ENCODE measurements at regions of chr11 and their contacts with region 1.

Region 1: DNA sequence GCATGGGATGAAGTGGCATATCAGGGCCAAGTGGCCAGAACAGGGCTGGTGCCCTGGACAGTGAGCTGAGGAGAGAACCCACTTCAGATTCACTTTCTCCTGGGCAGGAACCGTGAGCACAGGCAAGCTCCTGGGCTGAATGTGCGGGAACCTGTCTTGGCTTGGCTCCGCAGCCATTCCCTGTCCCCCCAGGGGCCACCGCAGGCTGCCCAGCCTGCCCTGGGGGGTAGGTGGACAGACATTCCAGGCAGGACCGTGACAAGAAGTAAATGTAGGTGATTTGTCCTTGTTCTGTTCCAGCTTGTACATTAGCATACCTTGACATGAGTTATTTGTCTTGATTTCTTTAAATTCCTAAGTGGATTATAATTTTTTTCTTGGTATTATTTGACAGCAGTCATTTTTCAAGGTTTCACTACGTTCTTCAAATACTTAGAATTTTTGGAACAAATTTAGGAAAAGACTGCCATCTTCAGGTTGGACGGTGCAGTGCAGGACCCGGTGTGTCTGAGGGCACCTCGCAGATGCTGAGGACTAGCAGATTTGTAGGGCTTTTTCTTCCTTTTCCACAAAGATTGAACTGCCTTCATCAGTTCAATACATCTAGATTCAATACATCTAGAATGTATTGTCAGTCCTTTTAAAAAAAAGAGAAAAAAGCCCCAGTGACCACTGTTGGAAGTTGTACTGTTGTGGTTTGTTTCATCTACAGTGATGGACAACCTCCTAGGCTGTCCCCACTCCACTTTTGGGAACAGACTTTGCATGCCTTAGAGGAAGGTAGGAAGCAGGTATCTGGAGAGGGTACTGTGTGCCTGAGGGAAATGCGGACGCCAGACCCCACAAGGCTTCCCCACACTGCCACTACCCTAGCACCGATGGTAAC is 115.1 kb upstream of the RASSF10 start:
- DNase-seq: peak in 1 of 2 donors; percentile 67
- ATAC-seq: peak in 2 of 3 donors; percentile 49 to 57
- H3K4me3 ChIP-seq: no peak overlapping the region
- H3K4me3 Mint-ChIP-seq: no peak overlapping the region
- H3K27ac ChIP-seq: no peak overlapping the region
- H3K27ac Mint-ChIP-seq: no peak overlapping the region
- H3K4me1 ChIP-seq: no peaks in the 10 kb centered on the region
- H3K4me1 Mint-ChIP-seq: no peaks in the 10 kb centered on the region
- H3K27me3 ChIP-seq: no peaks in the 10 kb centered on the region
- H3K27me3 Mint-ChIP-seq: peaks cover 24 to 33% of the 10 kb centered on the region in 2 donors
- CTCF ChIP-seq: no peak

Region 2: DNA sequence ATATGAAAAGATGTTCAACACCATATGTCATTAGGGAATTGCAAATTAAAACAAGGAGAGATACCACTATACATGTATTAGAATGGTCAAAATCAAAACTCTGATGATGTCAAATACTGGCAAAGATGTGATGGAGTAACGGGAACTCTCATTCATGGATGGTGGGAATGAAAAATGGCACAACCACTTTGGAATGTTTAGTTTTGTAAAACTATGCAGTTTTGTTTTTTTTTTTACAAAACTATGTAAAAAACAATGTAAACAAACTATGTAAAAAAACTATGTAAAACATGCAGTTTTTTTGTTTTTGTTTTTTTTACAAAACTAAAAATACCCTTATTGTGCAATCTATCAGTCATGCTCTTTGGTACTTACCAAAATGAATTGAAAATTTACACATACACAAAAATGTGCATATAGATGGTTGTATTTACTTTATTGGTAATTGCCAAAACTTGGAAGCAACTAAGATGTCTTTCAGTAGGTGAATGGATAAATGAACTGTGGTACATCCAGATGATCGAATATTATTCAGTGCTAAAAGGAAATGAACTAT is 1057.3 kb before region 1 on chr11:
- intact Hi-C with region 1: no loop called
- DNase-seq: no peak
- ATAC-seq: no peak
- H3K4me3 ChIP-seq: no peak overlapping the region
- H3K4me3 Mint-ChIP-seq: no peak overlapping the region
- H3K27ac ChIP-seq: no peak overlapping the region
- H3K27ac Mint-ChIP-seq: no peak overlapping the region
- H3K4me1 ChIP-seq: peaks cover 9% of the 10 kb centered on the region
- H3K4me1 Mint-ChIP-seq: peaks cover 0 to 8% of the 10 kb centered on the region in 2 donors
- H3K27me3 ChIP-seq: peaks cover 4% of the 10 kb centered on the region
- H3K27me3 Mint-ChIP-seq: peaks cover 12 to 25% of the 10 kb centered on the region in 2 donors
- CTCF ChIP-seq: no peak

Region 3: GRCh38 chr11:12331239-12331874 is 562.7 kb before region 1 on chr11:
- intact Hi-C with region 1: loop called (anchors 2 kb)
- DNase-seq: peak; percentile 26 to 85
- ATAC-seq: peak in 1 of 3 donors; percentile 68
- H3K4me3 ChIP-seq: no peak overlapping the region
- H3K4me3 Mint-ChIP-seq: no peak overlapping the region
- H3K27ac ChIP-seq: no peak overlapping the region
- H3K27ac Mint-ChIP-seq: no peak overlapping the region
- H3K4me1 ChIP-seq: no peaks in the 10 kb centered on the region
- H3K4me1 Mint-ChIP-seq: peaks cover 0 to 6% of the 10 kb centered on the region in 2 donors
- H3K27me3 ChIP-seq: no peaks in the 10 kb centered on the region
- H3K27me3 Mint-ChIP-seq: no peaks in the 10 kb centered on the region
- CTCF ChIP-seq: peak; percentile 71

Region 4: DNA sequence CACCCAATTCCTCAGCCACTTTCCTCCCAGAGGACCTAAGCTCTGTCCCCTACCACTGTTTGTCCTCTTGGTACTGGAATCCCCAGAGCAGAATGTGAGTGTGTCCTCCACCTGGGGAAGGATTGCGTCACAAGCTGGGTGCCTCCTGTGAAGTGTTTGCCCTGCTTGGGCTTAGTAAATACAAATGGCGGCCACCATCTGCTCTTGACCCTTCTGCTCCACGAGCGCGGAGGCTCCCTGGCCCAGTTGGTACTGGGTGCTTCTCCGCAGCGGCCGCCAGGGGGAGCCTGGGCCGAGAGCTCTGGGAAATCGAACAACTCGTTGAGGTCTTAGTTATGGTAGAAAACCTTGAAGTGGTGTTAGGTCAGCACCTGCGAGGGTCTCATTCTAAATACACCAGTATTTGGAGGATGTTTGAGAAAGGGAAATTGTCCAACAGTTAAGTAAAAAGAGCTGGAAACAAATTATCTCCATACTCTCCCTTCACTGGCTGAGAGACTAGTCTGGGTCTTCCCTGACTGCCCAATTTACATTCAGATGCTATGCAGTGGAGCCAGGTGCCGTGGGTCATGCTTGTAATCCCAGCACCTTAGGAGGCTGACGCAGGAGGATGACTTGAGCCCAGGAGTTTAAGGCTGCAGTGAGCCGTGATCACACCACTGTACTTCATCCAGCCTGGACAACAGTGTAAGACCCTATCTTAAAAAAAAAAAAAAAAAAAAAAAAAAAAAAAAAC is 294.5 kb before region 1 on chr11:
- intact Hi-C with region 1: loop called (anchors 5 kb)
- DNase-seq: peak; percentile 16 to 46
- ATAC-seq: peak in 1 of 3 donors; percentile 58
- H3K4me3 ChIP-seq: no peak overlapping the region
- H3K4me3 Mint-ChIP-seq: no peak overlapping the region
- H3K27ac ChIP-seq: no peak overlapping the region
- H3K27ac Mint-ChIP-seq: no peak overlapping the region
- H3K4me1 ChIP-seq: no peaks in the 10 kb centered on the region
- H3K4me1 Mint-ChIP-seq: peaks cover 5 to 6% of the 10 kb centered on the region in 2 donors
- H3K27me3 ChIP-seq: no peaks in the 10 kb centered on the region
- H3K27me3 Mint-ChIP-seq: peaks cover 8 to 30% of the 10 kb centered on the region in 2 donors
- CTCF ChIP-seq: peak; percentile 56

Region 5: GRCh38 chr11:12629601-12630313 is 264.3 kb before region 1 on chr11:
- intact Hi-C with region 1: no loop called
- DNase-seq: no peak
- ATAC-seq: no peak
- H3K4me3 ChIP-seq: no peak overlapping the region
- H3K4me3 Mint-ChIP-seq: no peak overlapping the region
- H3K27ac ChIP-seq: no peak overlapping the region
- H3K27ac Mint-ChIP-seq: no peak overlapping the region
- H3K4me1 ChIP-seq: no peaks in the 10 kb centered on the region
- H3K4me1 Mint-ChIP-seq: no peaks in the 10 kb centered on the region
- H3K27me3 ChIP-seq: no peaks in the 10 kb centered on the region
- H3K27me3 Mint-ChIP-seq: peaks cover 4 to 31% of the 10 kb centered on the region in 2 donors
- CTCF ChIP-seq: no peak

Region 6: GRCh38 chr11:12930850-12931249 is 36.8 kb after region 1 on chr11:
- intact Hi-C with region 1: no loop called
- DNase-seq: no peak
- ATAC-seq: no peak
- H3K4me3 ChIP-seq: no peak overlapping the region
- H3K4me3 Mint-ChIP-seq: no peak overlapping the region
- H3K27ac ChIP-seq: no peak overlapping the region
- H3K27ac Mint-ChIP-seq: no peak overlapping the region
- H3K4me1 ChIP-seq: no peaks in the 10 kb centered on the region
- H3K4me1 Mint-ChIP-seq: no peaks in the 10 kb centered on the region
- H3K27me3 ChIP-seq: peaks cover 3% of the 10 kb centered on the region
- H3K27me3 Mint-ChIP-seq: peaks cover 6 to 20% of the 10 kb centered on the region in 2 donors
- CTCF ChIP-seq: no peak